AG04450 (cell line): ENCODE measurements at regions of chr22 and their contacts with region 1.

Region 1: DNA sequence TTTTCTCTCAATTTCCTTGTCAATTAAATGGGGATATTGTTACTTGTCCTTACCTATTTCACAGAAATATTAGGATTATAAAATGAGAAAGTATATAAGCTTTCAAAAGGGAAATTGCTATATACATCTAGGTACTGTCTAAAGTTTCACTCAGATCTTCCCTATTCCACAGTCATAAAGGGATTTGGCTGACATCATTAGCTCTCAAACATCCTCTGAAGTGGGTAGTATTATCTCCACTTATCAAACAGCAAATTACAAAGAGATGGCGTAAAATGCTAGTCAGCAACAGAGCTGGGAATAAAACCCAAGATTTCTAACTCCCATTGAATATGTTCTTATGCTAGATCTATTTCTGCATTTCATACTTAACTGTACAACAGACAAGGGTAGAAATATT is 50.9 kb downstream of the SLC25A17 start:
- DNase-seq: no peak
- H3K4me3 ChIP-seq: no peak overlapping the region
- H3K27ac ChIP-seq: no peak overlapping the region
- H3K27me3 ChIP-seq: no peaks in the 10 kb centered on the region
- CTCF ChIP-seq: no peak

Region 2: DNA sequence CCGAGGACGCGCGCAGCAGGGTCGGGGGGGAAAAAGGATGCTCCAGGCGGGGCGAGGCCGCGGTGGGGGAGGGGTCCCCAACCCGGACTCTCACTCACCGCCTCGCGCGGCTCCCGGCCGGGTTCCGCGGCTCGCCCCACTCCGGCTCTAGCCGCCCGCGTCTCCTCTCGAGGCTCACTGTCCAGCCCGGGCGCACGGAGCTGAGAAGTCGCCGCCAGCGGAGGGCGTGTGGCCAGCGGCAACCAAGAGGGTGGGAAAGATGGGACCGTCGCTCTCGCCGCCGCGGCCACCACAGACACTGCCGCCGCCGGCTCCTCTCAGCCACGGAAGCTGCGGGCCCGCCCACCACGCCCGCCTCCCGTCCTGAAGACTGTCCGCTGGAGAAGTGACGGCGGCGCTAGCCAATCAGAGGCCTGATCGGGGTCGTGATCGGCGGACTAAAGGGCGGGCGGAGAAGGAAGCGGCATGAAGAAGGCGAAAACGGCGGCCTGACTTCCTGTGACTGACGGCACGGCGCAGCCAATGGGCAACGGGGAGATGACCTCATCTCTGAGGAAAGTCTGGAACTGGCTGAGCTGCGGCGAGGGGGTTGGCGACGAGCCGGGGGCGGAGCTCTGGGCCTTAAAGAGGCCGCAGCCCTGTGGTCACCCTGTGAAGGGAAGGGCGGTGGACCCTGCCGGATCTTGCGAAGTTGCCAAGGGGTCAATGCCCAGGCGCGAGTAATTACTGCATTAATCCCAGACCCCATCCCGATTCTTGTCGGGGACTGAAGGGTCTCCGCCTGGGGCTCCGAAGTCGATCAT is 131.6 kb before region 1 on chr22 and contains the start of gene MRTFA:
- CTCF ChIA-PET with region 1: no interaction called
- POLR2A ChIA-PET with region 1: no interaction called
- DNase-seq: peak; percentile 99
- H3K4me3 ChIP-seq: peak within 1 kb of the TSS; percentile 84
- H3K27ac ChIP-seq: peak within 1 kb of the TSS; percentile 83
- H3K27me3 ChIP-seq: no peaks in the 10 kb centered on the region
- CTCF ChIP-seq: no peak
- polyA plus RNA-seq, gene MRTFA: 6.8 and 11.6 TPM in 2 replicates

Region 3: DNA sequence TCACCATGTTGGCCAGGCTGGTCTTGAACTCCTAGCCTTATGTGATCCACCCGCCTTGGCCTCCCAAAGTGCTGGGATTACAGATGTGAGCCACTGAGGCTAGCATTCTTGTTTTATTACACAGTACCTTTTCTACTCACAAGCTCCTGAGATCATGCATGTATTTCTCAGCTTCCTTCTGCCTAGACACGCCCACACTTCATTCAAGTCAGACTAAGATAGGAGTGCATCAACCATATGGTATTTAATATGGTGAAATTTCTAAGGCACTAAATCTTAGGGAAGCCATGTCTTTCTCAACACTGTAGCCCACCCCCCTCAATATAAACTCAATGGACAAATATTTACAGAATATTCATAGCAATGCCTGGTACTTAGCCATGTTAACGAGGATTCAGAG is 11.1 kb before region 1 on chr22:
- CTCF ChIA-PET with region 1: interaction called, 25 read pairs
- POLR2A ChIA-PET with region 1: no interaction called
- DNase-seq: no peak
- H3K4me3 ChIP-seq: no peak overlapping the region
- H3K27ac ChIP-seq: no peak overlapping the region
- H3K27me3 ChIP-seq: no peaks in the 10 kb centered on the region
- CTCF ChIP-seq: no peak